CD14-positive monocyte (primary cell): ENCODE measurements at regions of chr12 and their contacts with region 1.

Region 1: GRCh38 chr12:54201001-54201794 is 12.4 kb upstream of the SMUG1 start:
- DNase-seq: peak; percentile 59 to 73 (median 62)
- H3K4me3 ChIP-seq: no peak overlapping the region
- H3K4me3 Mint-ChIP-seq: peak overlapping the region in 1 of 2 donors; percentile 30
- H3K27ac ChIP-seq: no peak overlapping the region
- H3K27ac Mint-ChIP-seq: no peak overlapping the region
- H3K4me1 ChIP-seq: peaks cover 13 to 17% of the 10 kb centered on the region in 2 donors
- H3K4me1 Mint-ChIP-seq: peaks cover 25% of the 10 kb centered on the region
- H3K27me3 ChIP-seq: peaks cover 3 to 38% of the 10 kb centered on the region in 2 donors
- H3K27me3 Mint-ChIP-seq: peaks cover 44 to 75% (median 70%) of the 10 kb centered on the region in 3 donors
- CTCF ChIP-seq: peak; percentile 99

Region 2: DNA sequence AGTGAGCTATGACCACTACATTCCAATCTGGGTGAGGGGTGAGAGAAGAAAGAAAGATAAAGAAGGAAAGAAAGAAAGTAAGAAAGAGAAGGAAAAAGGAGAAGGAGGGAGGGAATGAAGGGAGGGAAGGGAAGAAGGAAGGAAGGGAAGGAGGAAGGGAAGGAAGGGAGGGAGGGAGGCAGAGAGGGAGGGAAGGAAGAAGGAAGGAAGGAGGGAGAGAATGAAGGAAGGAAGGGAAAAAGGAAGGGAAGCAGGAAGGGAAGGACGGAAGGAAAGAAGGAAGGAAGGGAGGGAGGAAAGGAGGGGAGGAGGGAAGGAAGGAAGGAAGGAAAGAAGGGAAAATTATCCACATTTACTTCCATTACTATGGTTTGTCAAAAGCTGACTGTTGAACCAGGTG is 302.0 kb before region 1 on chr12:
- intact Hi-C with region 1: no loop called
- DNase-seq: no peak
- H3K4me3 ChIP-seq: no peak overlapping the region
- H3K4me3 Mint-ChIP-seq: no peak overlapping the region
- H3K27ac ChIP-seq: no peak overlapping the region
- H3K27ac Mint-ChIP-seq: peak overlapping the region in 1 of 7 donors; percentile 42
- H3K4me1 ChIP-seq: no peaks in the 10 kb centered on the region
- H3K4me1 Mint-ChIP-seq: no peaks in the 10 kb centered on the region
- H3K27me3 ChIP-seq: peaks cover 27 to 61% of the 10 kb centered on the region in 2 donors
- H3K27me3 Mint-ChIP-seq: peaks cover 23 to 45% (median 33%) of the 10 kb centered on the region in 3 donors
- CTCF ChIP-seq: no peak

Region 3: GRCh38 chr12:54005853-54006686 is 195.1 kb before region 1 on chr12:
- intact Hi-C with region 1: loop called (anchors 2 to 5 kb)
- DNase-seq: peak; percentile 73 to 84 (median 80)
- H3K4me3 ChIP-seq: peak overlapping the region; percentile 2 to 73 (median 42)
- H3K4me3 Mint-ChIP-seq: peak overlapping the region; percentile 85 to 96
- H3K27ac ChIP-seq: no peak overlapping the region
- H3K27ac Mint-ChIP-seq: peak overlapping the region in 1 of 7 donors; percentile 66
- H3K4me1 ChIP-seq: peaks cover 14 to 17% of the 10 kb centered on the region in 2 donors
- H3K4me1 Mint-ChIP-seq: peaks cover 27% of the 10 kb centered on the region
- H3K27me3 ChIP-seq: peaks cover 85 to 98% of the 10 kb centered on the region in 2 donors
- H3K27me3 Mint-ChIP-seq: peaks cover 98 to 99% (median 98%) of the 10 kb centered on the region in 3 donors
- CTCF ChIP-seq: peak; percentile 96